ENCODE measurements at regions of chr3 and their contacts with region 1.

Region 1: DNA sequence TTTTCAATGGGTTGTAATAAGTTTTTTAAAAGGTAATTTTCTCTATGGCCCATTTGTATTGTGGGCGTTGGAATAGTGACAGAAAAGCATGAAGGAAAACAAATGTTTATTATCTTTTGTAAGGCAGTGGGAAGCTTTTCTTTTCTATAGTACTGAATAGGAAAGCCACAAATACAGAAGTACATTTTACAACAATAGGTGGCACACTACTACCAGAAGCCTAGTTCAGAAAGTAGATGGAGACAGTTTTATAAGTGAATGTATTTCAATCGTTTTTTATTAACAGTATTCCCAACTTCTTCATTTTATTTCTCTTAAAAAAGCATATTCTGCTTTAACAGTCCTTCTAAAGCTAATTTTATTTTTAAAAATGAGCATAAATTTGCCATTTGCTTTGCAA is 296.7 kb downstream of the PTPRG start:
- DNase-seq: peak; percentile 27
- H3K4me3 ChIP-seq: no peak overlapping the region
- H3K27ac ChIP-seq: no peak overlapping the region
- H3K4me1 ChIP-seq: no peaks in the 10 kb centered on the region
- H3K27me3 ChIP-seq: no peaks in the 10 kb centered on the region
- CTCF ChIP-seq: peak; percentile 65
- EP300 ChIP-seq: no peak
- RAD21 ChIP-seq: peak; percentile 88

Region 2: DNA sequence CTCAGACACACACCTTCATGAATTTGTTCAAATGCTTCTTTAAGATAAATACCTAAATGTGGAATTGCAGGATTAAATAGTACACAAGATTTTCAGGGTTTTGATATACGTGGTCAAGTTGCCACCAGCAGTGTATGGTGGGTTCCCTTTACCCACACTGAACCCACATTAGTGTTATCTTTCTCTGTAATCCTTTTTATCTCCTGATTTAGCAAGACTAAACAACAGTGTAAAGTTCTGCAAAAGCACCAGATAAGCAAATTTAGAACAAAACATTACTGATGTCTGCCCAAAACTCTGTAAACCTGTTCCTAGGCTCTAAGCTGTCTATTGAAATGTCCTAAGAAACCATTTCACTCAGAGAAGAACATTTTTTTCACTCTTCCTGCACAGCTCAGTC is 959.7 kb before region 1 on chr3:
- CTCF ChIA-PET with region 1: no interaction called
- POLR2A ChIA-PET with region 1: no interaction called
- DNase-seq: no peak
- H3K4me3 ChIP-seq: no peak overlapping the region
- H3K27ac ChIP-seq: no peak overlapping the region
- H3K4me1 ChIP-seq: no peaks in the 10 kb centered on the region
- H3K27me3 ChIP-seq: no peaks in the 10 kb centered on the region
- CTCF ChIP-seq: no peak
- EP300 ChIP-seq: no peak
- RAD21 ChIP-seq: no peak

Region 3: GRCh38 chr3:61841111-61841853 is 16.8 kb before region 1 on chr3:
- CTCF ChIA-PET with region 1: interaction called, 15 read pairs
- POLR2A ChIA-PET with region 1: no interaction called
- DNase-seq: no peak
- H3K4me3 ChIP-seq: no peak overlapping the region
- H3K27ac ChIP-seq: no peak overlapping the region
- H3K4me1 ChIP-seq: peaks cover 0 to 15% of the 10 kb centered on the region in 2 experiments; a peak in 3 of 4 replicates
- H3K27me3 ChIP-seq: no peaks in the 10 kb centered on the region
- CTCF ChIP-seq: no peak
- EP300 ChIP-seq: no peak
- RAD21 ChIP-seq: no peak

Region 4: GRCh38 chr3:61936344-61936937 is 78.4 kb after region 1 on chr3:
- CTCF ChIA-PET with region 1: interaction called, 20 read pairs
- POLR2A ChIA-PET with region 1: no interaction called
- DNase-seq: peak; percentile 35
- H3K4me3 ChIP-seq: no peak overlapping the region
- H3K27ac ChIP-seq: no peak overlapping the region
- H3K4me1 ChIP-seq: peaks cover 0 to 3% of the 10 kb centered on the region in 2 experiments; a peak in 1 of 4 replicates
- H3K27me3 ChIP-seq: no peaks in the 10 kb centered on the region
- CTCF ChIP-seq: peak; percentile 63
- EP300 ChIP-seq: no peak
- RAD21 ChIP-seq: peak; percentile 56

Region 5: GRCh38 chr3:61967937-61968336 is 109.9 kb after region 1 on chr3:
- CTCF ChIA-PET with region 1: no interaction called
- POLR2A ChIA-PET with region 1: no interaction called
- DNase-seq: no peak
- H3K4me3 ChIP-seq: no peak overlapping the region
- H3K27ac ChIP-seq: no peak overlapping the region
- H3K4me1 ChIP-seq: peaks cover 0 to 15% of the 10 kb centered on the region in 2 experiments; a peak in 1 of 4 replicates
- H3K27me3 ChIP-seq: no peaks in the 10 kb centered on the region
- CTCF ChIP-seq: no peak
- EP300 ChIP-seq: no peak
- RAD21 ChIP-seq: no peak

Region 6: GRCh38 chr3:62131592-62131991 is 273.5 kb after region 1 on chr3:
- CTCF ChIA-PET with region 1: interaction called, 30 read pairs
- POLR2A ChIA-PET with region 1: no interaction called
- DNase-seq: peak; percentile 28
- H3K4me3 ChIP-seq: no peak overlapping the region; a peak in 1 of 4 replicates
- H3K27ac ChIP-seq: no peak overlapping the region
- H3K4me1 ChIP-seq: peaks cover 0 to 7% of the 10 kb centered on the region in 2 experiments; a peak in 2 of 4 replicates
- H3K27me3 ChIP-seq: no peaks in the 10 kb centered on the region
- CTCF ChIP-seq: peak; percentile 67
- EP300 ChIP-seq: no peak
- RAD21 ChIP-seq: peak; percentile 63

Region 7: DNA sequence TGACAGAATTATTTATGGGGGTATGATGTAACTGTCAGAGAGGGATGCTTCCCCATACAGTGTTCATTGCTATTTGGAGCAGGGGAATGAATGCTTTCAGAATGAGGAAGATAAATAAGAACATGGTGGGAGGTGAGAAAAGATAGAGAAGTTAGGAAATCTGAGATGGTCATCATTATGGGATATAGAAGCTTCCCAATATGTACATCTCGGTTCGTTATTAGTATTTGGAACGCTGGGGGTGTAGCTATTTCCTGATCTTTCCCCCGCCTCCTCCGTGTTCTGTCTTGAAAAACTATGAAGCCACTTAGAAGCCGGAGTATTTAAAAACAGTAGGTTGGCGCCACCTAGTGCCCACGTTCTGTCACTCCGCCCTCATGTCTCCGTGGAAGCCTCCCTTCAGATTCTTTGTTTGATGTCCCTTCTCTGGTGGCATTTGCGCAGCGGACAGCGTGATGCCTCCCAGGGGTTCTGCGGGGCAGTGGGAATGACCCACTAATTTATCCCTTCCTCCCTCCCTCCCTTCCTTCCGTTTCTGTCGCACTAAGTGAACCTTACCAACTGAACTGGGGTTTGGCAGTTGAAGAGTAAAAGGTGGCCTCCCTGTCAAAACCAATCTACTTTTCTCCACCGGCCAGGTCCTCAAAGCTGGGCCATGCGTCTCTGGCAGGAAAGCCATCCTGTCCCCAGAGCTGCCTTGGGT is 330.8 kb after region 1 on chr3:
- CTCF ChIA-PET with region 1: interaction called, 102 read pairs
- POLR2A ChIA-PET with region 1: no interaction called
- DNase-seq: peak; percentile 76
- H3K4me3 ChIP-seq: peak overlapping the region in 1 of 2 experiments; percentile 29; a peak in 1 of 4 replicates
- H3K27ac ChIP-seq: no peak overlapping the region
- H3K4me1 ChIP-seq: peaks cover 0 to 4% of the 10 kb centered on the region in 2 experiments; a peak in 1 of 4 replicates
- H3K27me3 ChIP-seq: no peaks in the 10 kb centered on the region
- CTCF ChIP-seq: peak; percentile 87
- EP300 ChIP-seq: no peak
- RAD21 ChIP-seq: peak; percentile 87

Measured in SK-N-SH (cell line).